ENCODE measurements at regions of chr4 and their contacts with region 1.

Region 1: GRCh38 chr4:146342600-146343192 is 128.4 kb downstream of the REELD1 start:
- DNase-seq: peak; percentile 77
- H3K4me3 ChIP-seq: no peak overlapping the region
- H3K27ac ChIP-seq: peak overlapping the region; percentile 76
- H3K4me1 ChIP-seq: peaks cover 82% of the 10 kb centered on the region
- H3K27me3 ChIP-seq: no peaks in the 10 kb centered on the region
- CTCF ChIP-seq: peak; percentile 64

Region 2: GRCh38 chr4:146243141-146243882 is 99.4 kb before region 1 on chr4:
- CTCF ChIA-PET with region 1: no interaction called
- POLR2A ChIA-PET with region 1: no interaction called
- intact Hi-C with region 1: loop called (anchors 1 kb)
- DNase-seq: peak; percentile 45
- H3K4me3 ChIP-seq: no peak overlapping the region
- H3K27ac ChIP-seq: no peak overlapping the region
- H3K4me1 ChIP-seq: peaks cover 14% of the 10 kb centered on the region
- H3K27me3 ChIP-seq: no peaks in the 10 kb centered on the region
- CTCF ChIP-seq: peak; percentile 70

Region 3: GRCh38 chr4:146522098-146522868 is 179.6 kb after region 1 on chr4:
- CTCF ChIA-PET with region 1: no interaction called
- POLR2A ChIA-PET with region 1: interaction called, 3 read pairs
- intact Hi-C with region 1: loop called (anchors 10 kb)
- DNase-seq: peak; percentile 93
- H3K4me3 ChIP-seq: peak overlapping the region; percentile 81
- H3K27ac ChIP-seq: peak overlapping the region; percentile 95
- H3K4me1 ChIP-seq: peaks cover 19% of the 10 kb centered on the region
- H3K27me3 ChIP-seq: no peaks in the 10 kb centered on the region
- CTCF ChIP-seq: no peak

Region 4: GRCh38 chr4:146638801-146639605 is 296.3 kb after region 1 on chr4 and contains the start of gene POU4F2:
- CTCF ChIA-PET with region 1: no interaction called
- POLR2A ChIA-PET with region 1: no interaction called
- intact Hi-C with region 1: loop called (anchors 5 kb)
- DNase-seq: peak; percentile 85
- H3K4me3 ChIP-seq: peak within 1 kb of the TSS; percentile 61
- H3K27ac ChIP-seq: no peak within 1 kb of the TSS
- H3K4me1 ChIP-seq: peaks cover 10% of the 10 kb centered on the region
- H3K27me3 ChIP-seq: peaks cover 38% of the 10 kb centered on the region
- CTCF ChIP-seq: no peak
- total RNA-seq, gene POU4F2: 2.6 and 4.6 TPM in 2 replicates

Region 5: GRCh38 chr4:146916479-146917076 is 573.9 kb after region 1 on chr4:
- CTCF ChIA-PET with region 1: no interaction called
- POLR2A ChIA-PET with region 1: no interaction called
- intact Hi-C with region 1: loop called (anchors 2 kb)
- DNase-seq: peak; percentile 72
- H3K4me3 ChIP-seq: no peak overlapping the region
- H3K27ac ChIP-seq: no peak overlapping the region
- H3K4me1 ChIP-seq: peaks cover 22% of the 10 kb centered on the region
- H3K27me3 ChIP-seq: no peaks in the 10 kb centered on the region
- CTCF ChIP-seq: peak; percentile 91